SK-N-SH (cell line): ENCODE measurements at regions of chr10 and their contacts with region 1.

Region 1: GRCh38 chr10:68901104-68901927 is at the start of gene DDX50:
- DNase-seq: peak; percentile 93
- H3K4me3 ChIP-seq: peak within 1 kb of the TSS; percentile 75 to 87
- H3K27ac ChIP-seq: peak within 1 kb of the TSS; percentile 97 to 98
- H3K4me1 ChIP-seq: peaks cover 0 to 13% of the 10 kb centered on the region in 2 experiments; a peak in 2 of 4 replicates
- H3K27me3 ChIP-seq: no peaks in the 10 kb centered on the region
- CTCF ChIP-seq: 0 out of 2 replicates have a peak, but pooled peaks have one; percentile 15
- EP300 ChIP-seq: no peak
- RAD21 ChIP-seq: no peak
- polyA plus RNA-seq, gene DDX50: 33.5 and 40.7 TPM in 2 replicates

Region 2: GRCh38 chr10:68550747-68551411 is 350.4 kb before region 1 on chr10:
- CTCF ChIA-PET with region 1: interaction called, 11 read pairs
- POLR2A ChIA-PET with region 1: interaction called, 3 read pairs
- DNase-seq: peak; percentile 71
- H3K4me3 ChIP-seq: no peak overlapping the region
- H3K27ac ChIP-seq: no peak overlapping the region
- H3K4me1 ChIP-seq: no peaks in the 10 kb centered on the region
- H3K27me3 ChIP-seq: no peaks in the 10 kb centered on the region
- CTCF ChIP-seq: peak; percentile 77
- EP300 ChIP-seq: no peak
- RAD21 ChIP-seq: peak; percentile 80

Region 3: DNA sequence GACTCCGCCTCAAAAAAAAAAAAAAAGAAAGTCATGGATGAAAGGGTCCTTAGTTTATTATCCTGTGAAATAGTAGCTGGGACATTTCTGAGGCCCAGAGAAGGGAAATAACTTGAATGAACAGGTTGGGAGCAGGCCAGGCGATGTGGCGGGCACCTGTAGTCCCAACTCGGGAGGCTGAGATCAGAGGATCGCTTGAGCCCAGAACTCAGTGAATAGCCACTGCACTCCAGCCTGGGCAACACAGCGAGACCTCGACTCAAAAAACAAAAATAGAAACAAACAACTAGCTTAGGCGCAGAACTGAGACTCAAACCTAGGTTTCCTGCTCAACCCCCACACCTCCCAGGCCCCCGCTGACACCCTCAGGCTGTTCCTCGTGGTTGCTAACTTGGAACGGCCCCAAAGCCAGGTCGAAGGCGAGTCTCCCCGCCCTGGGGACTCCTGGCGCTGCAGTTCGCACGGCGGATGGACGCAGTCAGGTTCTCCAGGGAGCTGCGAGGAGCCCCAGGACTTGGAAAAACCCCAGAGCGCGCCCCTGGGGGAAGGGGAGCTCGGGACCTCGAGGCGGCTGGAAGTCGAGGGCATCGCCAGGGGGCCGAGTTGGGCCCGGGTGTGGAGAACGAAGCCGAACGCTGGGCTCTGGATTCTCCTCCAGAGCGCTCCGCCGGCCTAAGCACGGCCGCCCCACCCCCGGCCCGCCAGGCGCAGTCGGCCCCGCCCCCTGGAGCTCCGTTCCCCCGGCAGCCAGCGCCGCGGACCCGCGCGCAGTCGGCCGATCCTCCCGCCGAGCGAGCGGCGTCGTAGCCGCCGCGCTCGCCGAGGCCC is 74.3 kb before region 1 on chr10 and contains the start of gene STOX1:
- CTCF ChIA-PET with region 1: interaction called, 14 read pairs
- POLR2A ChIA-PET with region 1: interaction called, 3 read pairs
- DNase-seq: peak; percentile 94
- H3K4me3 ChIP-seq: peak within 1 kb of the TSS; percentile 52 to 73
- H3K27ac ChIP-seq: no peak within 1 kb of the TSS; a peak in 1 of 4 replicates
- H3K4me1 ChIP-seq: no peaks in the 10 kb centered on the region; a peak in 1 of 4 replicates
- H3K27me3 ChIP-seq: peaks cover 9% of the 10 kb centered on the region; the same call in 1 of the 2 replicates
- CTCF ChIP-seq: no peak
- EP300 ChIP-seq: no peak
- RAD21 ChIP-seq: no peak
- polyA plus RNA-seq, gene STOX1: 0.13 and 0.21 TPM in 2 replicates

Region 4: DNA sequence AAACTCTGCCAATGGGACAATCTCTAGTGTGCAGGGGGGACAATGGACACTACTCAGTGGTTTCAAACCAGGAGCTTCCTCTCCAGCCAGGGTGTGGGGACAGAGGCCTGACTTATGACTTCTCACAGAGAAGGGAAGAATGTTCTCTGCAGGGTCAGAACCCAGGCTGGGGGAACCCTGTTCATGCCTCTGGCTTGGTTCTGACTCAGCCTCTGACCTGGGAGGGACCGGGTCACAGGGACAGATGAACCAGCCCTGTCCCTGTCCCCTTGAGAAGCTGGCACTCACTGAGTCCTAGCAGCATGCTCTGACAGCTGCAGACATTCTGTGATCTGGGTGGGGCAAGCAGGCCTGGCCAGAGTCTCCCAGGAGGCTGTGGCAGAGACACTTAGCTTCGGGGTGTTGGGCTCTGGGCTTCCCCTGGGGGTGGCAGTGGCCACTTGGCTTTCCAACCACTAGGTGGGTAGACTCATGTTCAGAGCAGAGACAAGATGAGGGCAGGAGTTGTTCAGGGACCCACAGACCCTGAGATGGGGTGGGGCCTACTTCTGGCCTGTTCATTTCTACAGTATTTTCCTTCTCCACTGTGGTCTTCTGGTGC is 563.6 kb after region 1 on chr10:
- CTCF ChIA-PET with region 1: no interaction called
- POLR2A ChIA-PET with region 1: no interaction called
- DNase-seq: no peak
- H3K4me3 ChIP-seq: no peak overlapping the region
- H3K27ac ChIP-seq: no peak overlapping the region
- H3K4me1 ChIP-seq: peaks cover 8 to 21% of the 10 kb centered on the region in 2 experiments; a peak in 2 of 4 replicates
- H3K27me3 ChIP-seq: no peaks in the 10 kb centered on the region
- CTCF ChIP-seq: no peak
- EP300 ChIP-seq: no peak
- RAD21 ChIP-seq: no peak

Region 5: GRCh38 chr10:69895759-69896158 is 994.4 kb after region 1 on chr10:
- CTCF ChIA-PET with region 1: no interaction called
- POLR2A ChIA-PET with region 1: no interaction called
- DNase-seq: peak; percentile 58
- H3K4me3 ChIP-seq: no peak overlapping the region
- H3K27ac ChIP-seq: peak overlapping the region in 1 of 2 experiments; percentile 29; a peak in 1 of 4 replicates
- H3K4me1 ChIP-seq: peaks cover 0 to 24% of the 10 kb centered on the region in 2 experiments; a peak in 1 of 4 replicates
- H3K27me3 ChIP-seq: no peaks in the 10 kb centered on the region
- CTCF ChIP-seq: no peak
- EP300 ChIP-seq: no peak
- RAD21 ChIP-seq: no peak